Panc1 (cell line): ENCODE measurements at regions of chr11 and their contacts with region 1.

Region 1: GRCh38 chr11:111819161-111819828 is 52.1 kb downstream of the ALG9 start:
- DNase-seq: no peak
- ATAC-seq: no peak
- H3K4me3 ChIP-seq: no peak overlapping the region
- H3K27ac ChIP-seq: no peak overlapping the region
- H3K4me1 ChIP-seq: no peaks in the 10 kb centered on the region
- H3K27me3 ChIP-seq: no peaks in the 10 kb centered on the region
- CTCF ChIP-seq: no peak

Region 2: DNA sequence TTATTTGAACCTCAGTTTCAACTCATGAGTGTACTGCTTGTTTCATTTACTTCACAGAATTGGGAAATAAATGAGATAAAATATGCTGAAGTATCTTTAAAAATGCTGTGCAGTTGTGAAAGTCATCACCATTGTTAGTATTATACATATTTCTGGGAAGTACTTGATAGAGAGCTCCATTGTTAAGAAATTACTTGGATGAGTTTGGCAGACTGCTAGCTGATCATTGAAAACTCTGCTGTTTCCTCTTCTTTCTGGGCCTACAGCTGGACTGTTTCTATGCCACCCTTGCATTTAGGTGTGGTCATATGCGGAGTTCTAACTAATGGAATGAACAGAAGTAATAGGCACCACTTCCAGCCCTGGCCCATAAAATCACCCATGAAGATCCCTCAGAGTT is 207.1 kb before region 1 on chr11:
- CTCF ChIA-PET with region 1: no interaction called
- POLR2A ChIA-PET with region 1: interaction called, 16 read pairs
- in situ Hi-C with region 1: no loop called
- intact Hi-C with region 1: no loop called
- DNase-seq: no peak
- ATAC-seq: no peak
- H3K4me3 ChIP-seq: no peak overlapping the region
- H3K27ac ChIP-seq: no peak overlapping the region
- H3K4me1 ChIP-seq: no peaks in the 10 kb centered on the region
- H3K27me3 ChIP-seq: no peaks in the 10 kb centered on the region
- CTCF ChIP-seq: no peak